ENCODE measurements at regions of chr7 and their contacts with region 1.

Region 1: GRCh38 chr7:116525913-116526861 is 1.4 kb downstream of the CAV1 start:
- DNase-seq: peak; percentile 86
- H3K4me3 Mint-ChIP-seq: peak overlapping the region; percentile 93
- H3K27ac Mint-ChIP-seq: peak overlapping the region; percentile 73
- H3K4me1 Mint-ChIP-seq: peaks cover 59% of the 10 kb centered on the region
- H3K27me3 Mint-ChIP-seq: no peaks in the 10 kb centered on the region
- CTCF ChIP-seq: peak; percentile 93

Region 2: DNA sequence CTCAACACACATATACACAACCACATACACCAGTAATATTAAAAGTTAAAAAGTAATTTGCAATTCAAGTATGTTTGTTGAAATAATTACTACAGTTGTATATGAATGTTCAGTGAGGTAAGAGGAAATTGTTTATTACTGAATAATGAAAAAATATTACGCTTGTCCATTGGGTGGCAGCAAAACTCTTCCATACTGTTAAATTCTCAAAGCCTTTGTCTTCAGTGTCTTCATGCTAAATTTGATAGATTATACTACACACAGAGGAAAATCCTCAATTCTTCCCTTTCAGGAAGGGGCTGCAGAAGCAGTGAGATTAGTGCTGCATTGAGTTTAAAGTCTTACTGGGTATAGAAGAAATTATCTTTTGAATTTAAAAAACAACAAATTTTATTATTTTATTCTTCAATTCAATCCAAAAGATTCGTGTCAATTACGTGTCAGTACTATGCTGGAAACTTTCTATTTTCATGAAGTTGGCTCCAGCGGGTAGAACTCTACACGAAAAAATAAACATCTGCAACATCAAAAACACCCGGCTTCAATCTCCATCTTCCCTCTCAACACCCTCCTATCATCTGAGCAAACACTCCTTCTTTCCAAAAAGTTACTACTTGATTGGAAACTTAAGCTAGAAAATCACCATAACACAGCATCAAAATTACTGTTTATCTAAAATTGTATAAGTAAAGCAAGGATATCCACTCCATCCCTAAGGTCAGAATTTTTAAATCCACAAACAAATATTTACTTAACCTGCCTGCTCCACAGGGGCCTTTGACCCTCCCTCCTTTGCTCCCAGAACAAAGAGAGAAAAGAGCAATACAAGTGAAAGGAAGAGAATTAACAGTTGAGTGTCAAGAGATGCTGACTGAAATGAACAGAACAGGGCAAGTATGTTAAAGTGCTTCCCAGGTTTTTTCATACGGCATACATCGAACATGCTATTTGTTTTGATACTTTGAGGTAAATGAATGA is 352.8 kb before region 1 on chr7:
- CTCF ChIA-PET with region 1: no interaction called
- intact Hi-C with region 1: no loop called
- DNase-seq: peak; percentile 38
- H3K4me3 Mint-ChIP-seq: no peak overlapping the region
- H3K27ac Mint-ChIP-seq: no peak overlapping the region
- H3K4me1 Mint-ChIP-seq: peaks cover 23% of the 10 kb centered on the region
- H3K27me3 Mint-ChIP-seq: peaks cover 17% of the 10 kb centered on the region
- CTCF ChIP-seq: peak; percentile 25

Region 3: DNA sequence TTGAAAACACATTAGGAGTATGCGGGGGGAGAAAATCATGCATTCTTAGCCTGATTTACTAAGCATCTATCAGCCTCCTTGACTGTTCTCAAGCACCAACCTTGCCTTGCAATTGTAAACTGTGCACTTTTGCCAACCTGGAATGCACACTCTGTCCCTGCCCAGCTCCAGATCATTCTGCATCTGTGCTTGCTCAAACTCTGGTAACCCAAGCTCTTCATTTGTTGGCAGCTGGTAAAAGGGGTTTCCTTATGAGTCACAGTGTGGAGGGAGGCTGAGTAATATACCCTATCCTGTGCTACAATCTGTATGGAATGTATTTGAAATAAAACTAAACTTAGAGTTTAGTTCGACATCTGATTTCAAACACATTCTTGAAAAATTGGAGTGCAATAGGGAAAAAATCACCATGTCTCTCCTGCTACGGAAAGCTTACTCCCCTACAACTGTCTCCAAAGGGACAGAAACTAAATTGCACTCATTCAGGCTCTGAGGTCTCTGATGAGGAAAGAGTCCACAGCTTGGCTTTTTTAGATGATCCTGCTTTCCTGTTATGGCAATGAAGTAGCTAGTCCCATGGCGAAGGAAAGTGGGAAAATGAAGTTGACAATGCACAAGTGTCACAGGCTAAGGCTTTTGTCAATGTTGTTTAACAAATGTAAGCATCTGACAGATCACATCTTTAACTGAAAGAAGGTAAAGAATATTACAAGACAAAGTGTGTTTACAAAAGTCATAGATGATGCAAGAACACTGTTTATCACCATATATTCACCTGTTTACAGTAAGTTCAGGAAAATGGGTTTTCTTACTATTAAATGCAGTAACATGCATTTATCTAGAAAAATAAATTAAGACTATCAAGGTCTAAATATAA is 254.0 kb before region 1 on chr7:
- CTCF ChIA-PET with region 1: interaction called, 4 read pairs
- intact Hi-C with region 1: loop called (anchors 5 kb)
- DNase-seq: peak; percentile 62
- H3K4me3 Mint-ChIP-seq: peak overlapping the region; percentile 23
- H3K27ac Mint-ChIP-seq: peak overlapping the region; percentile 68
- H3K4me1 Mint-ChIP-seq: peaks cover 52% of the 10 kb centered on the region
- H3K27me3 Mint-ChIP-seq: no peaks in the 10 kb centered on the region
- CTCF ChIP-seq: no peak

Region 4: DNA sequence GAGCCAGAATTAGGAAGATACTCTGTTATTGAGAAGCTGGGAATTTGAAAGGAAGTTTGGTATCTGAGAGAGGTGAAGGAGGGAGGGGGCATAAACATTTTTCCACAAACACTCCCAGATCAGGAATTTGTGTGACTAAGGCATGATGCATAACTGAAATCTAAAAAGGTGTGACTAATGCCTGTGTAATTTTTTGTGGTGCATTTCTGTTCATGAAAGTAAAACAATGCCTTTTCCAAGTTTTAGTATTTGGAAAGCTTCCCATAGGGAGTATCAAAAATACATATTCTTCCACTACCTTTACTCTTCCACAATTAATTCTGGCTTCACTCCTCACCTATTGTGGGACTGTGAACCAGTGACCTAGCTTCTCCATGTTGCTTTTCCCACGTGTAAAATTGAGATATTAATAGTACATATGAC is 83.1 kb before region 1 on chr7:
- CTCF ChIA-PET with region 1: interaction called, 9 read pairs
- intact Hi-C with region 1: loop called (anchors 5 kb)
- DNase-seq: peak; percentile 36
- H3K4me3 Mint-ChIP-seq: no peak overlapping the region
- H3K27ac Mint-ChIP-seq: peak overlapping the region; percentile 71
- H3K4me1 Mint-ChIP-seq: peaks cover 65% of the 10 kb centered on the region
- H3K27me3 Mint-ChIP-seq: no peaks in the 10 kb centered on the region
- CTCF ChIP-seq: no peak

Region 5: DNA sequence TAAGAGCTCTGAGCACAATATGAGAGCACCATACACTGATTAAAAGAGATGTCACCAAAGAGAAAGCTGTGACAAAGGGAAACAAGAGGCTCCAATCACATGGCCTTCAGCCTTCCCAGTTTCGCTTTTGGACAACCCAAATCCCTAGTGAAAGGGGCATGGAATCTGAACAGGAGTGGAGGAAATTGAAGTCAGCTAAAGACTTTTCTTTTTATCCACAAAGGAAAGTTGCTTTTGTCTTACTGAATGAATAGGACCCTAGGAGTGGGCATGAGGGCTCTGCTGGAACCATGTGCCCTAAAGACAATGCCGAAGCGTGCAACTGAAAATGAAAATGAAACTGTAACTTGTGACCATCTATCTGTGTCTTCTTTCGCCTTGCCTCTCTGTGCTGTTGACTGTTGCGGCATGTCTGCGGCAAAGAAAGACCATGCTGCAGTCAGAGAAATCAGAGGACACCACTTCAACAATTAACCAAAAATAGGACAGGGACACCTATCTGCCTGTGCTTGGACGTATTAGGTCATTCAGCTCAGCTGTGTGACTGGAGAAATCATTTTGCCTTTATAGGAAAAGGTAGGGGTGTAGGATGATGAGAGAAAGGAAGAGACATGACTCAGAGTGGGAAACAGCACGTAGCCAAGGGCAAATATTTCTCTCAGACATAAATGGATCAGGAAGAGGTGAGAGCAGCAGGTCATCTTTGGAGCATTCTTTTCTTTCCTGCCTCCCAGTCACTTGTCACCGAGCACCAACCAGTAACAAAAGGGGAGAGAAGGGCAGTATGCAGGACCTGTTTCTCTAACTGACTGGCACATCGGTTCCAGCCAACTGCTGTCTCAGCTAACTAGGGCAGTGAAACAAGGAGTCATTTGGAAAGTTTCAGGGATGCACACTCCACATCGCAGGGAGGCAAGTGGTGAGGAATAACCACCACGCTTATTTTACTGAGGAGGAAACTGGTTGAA is 14.4 kb before region 1 on chr7:
- CTCF ChIA-PET with region 1: no interaction called
- intact Hi-C with region 1: no loop called
- DNase-seq: no peak
- H3K4me3 Mint-ChIP-seq: peak overlapping the region; percentile 71
- H3K27ac Mint-ChIP-seq: peak overlapping the region; percentile 57
- H3K4me1 Mint-ChIP-seq: peaks cover 38% of the 10 kb centered on the region
- H3K27me3 Mint-ChIP-seq: no peaks in the 10 kb centered on the region
- CTCF ChIP-seq: no peak

Region 6: GRCh38 chr7:116571037-116571436 is 44.9 kb after region 1 on chr7:
- CTCF ChIA-PET with region 1: interaction called, 5 read pairs
- intact Hi-C with region 1: loop called (anchors 5 kb)
- DNase-seq: no peak
- H3K4me3 Mint-ChIP-seq: no peak overlapping the region
- H3K27ac Mint-ChIP-seq: peak overlapping the region; percentile 79
- H3K4me1 Mint-ChIP-seq: peaks cover 53% of the 10 kb centered on the region
- H3K27me3 Mint-ChIP-seq: no peaks in the 10 kb centered on the region
- CTCF ChIP-seq: no peak